T-cell (primary cell): ENCODE measurements at regions of chr4 and their contacts with region 1.

Region 1: DNA sequence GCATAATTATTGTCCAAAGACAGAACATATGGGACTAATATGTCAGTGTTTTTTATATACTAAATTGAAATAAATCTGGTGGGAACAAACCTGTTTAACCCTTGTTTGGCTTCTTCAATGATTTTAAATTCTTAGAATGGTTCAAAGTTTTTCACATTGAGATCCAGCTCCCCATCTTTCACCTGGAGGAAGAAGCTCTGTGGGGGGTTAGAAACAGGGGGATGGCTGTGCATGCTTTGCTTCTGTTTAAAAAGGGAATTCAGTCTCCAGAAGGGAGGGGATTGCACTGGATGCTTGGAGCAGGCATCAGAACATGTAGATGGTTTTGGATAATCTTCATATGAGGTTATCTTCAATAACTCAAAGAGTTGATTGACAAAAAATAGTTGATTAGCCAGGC is 72.1 kb downstream of the GALNT7 start:
- DNase-seq: no peak
- ATAC-seq: no peak
- H3K4me3 ChIP-seq: no peak overlapping the region
- H3K4me3 Mint-ChIP-seq: no peak overlapping the region
- H3K27ac ChIP-seq: no peak overlapping the region
- H3K27ac Mint-ChIP-seq: no peak overlapping the region
- H3K4me1 ChIP-seq: peaks cover 4 to 5% of the 10 kb centered on the region in 2 experiments
- H3K4me1 Mint-ChIP-seq: peaks cover 24 to 42% (median 33%) of the 10 kb centered on the region in 3 donors
- H3K27me3 ChIP-seq: no peaks in the 10 kb centered on the region
- H3K27me3 Mint-ChIP-seq: no peaks in the 10 kb centered on the region

Region 2: GRCh38 chr4:172998527-172999469 is 241.9 kb before region 1 on chr4:
- CTCF ChIA-PET with region 1: no interaction called
- POLR2A ChIA-PET with region 1: no interaction called
- DNase-seq: no peak
- ATAC-seq: no peak
- H3K4me3 ChIP-seq: no peak overlapping the region
- H3K4me3 Mint-ChIP-seq: no peak overlapping the region
- H3K27ac ChIP-seq: no peak overlapping the region
- H3K27ac Mint-ChIP-seq: no peak overlapping the region
- H3K4me1 ChIP-seq: no peaks in the 10 kb centered on the region
- H3K4me1 Mint-ChIP-seq: no peaks in the 10 kb centered on the region
- H3K27me3 ChIP-seq: peaks cover 0 to 3% of the 10 kb centered on the region in 2 experiments
- H3K27me3 Mint-ChIP-seq: peaks cover 11 to 20% of the 10 kb centered on the region in 2 donors

Region 3: GRCh38 chr4:173282626-173283025 is 41.9 kb after region 1 on chr4:
- CTCF ChIA-PET with region 1: no interaction called
- POLR2A ChIA-PET with region 1: interaction called in 1 of 2 experiments, 11 read pairs
- DNase-seq: no peak
- ATAC-seq: no peak
- H3K4me3 ChIP-seq: no peak overlapping the region
- H3K4me3 Mint-ChIP-seq: no peak overlapping the region
- H3K27ac ChIP-seq: no peak overlapping the region
- H3K27ac Mint-ChIP-seq: no peak overlapping the region
- H3K4me1 ChIP-seq: no peaks in the 10 kb centered on the region
- H3K4me1 Mint-ChIP-seq: peaks cover 0 to 10% (median 2%) of the 10 kb centered on the region in 3 donors
- H3K27me3 ChIP-seq: no peaks in the 10 kb centered on the region
- H3K27me3 Mint-ChIP-seq: no peaks in the 10 kb centered on the region